ENCODE measurements at regions of chr5 and their contacts with region 1.

Region 1: DNA sequence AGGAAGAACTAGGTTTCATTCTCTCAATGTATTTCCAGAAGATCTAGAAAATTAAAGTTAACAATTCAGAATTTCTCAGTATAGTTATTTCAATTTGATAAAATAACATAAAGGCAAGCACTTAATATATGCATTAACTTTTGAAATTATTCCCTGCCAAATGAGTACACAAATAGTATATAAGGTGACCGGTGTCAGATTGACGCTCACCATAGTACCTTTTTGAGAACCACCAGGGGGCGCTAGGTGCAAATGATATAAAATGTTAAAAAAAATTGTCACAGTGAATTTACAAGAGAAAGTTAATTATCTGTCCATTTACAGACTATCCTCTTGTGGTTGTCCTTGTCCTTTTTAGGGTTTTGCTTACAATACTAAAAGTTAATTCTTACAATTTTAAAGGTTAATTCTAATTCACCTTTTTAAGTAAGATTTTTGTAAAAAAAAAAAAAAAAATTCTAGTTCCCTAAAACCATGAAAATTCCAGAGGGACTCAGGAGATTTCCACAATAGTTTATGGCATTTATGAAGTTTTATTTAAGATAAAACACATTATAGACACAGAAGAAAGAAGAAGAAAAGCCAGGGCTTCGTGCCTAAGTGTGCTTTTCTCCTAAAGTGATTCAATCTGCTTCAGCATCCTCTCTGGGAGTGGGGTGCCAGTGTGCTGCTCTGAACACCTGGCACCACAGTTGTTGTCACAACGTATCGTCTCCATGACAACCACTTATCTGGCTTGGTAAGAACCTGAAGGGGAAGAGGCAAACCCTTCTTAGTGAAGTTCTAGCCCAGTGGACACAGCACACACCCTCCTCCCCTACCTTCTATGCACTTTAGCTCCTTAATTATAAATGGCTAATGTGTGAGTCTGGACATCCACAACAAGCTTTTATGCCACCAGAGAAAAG is 1.7 kb downstream of the ADAMTS16 start:
- DNase-seq: peak in 1 of 2 donors; percentile 22
- ATAC-seq: peak; percentile 68 to 81
- H3K4me3 ChIP-seq: peak overlapping the region; percentile 42 to 48 (median 44)
- H3K27ac ChIP-seq: no peak overlapping the region
- H3K4me1 ChIP-seq: peaks cover 7 to 22% of the 10 kb centered on the region in 2 donors
- H3K27me3 ChIP-seq: peaks cover 20 to 25% (median 24%) of the 10 kb centered on the region in 3 donors
- CTCF ChIP-seq: peak; percentile 72 to 82 (median 75)
- POLR2A ChIP-seq: no peak

Region 2: GRCh38 chr5:5116956-5117355 is 24.9 kb before region 1 on chr5:
- in situ Hi-C with region 1: no loop called
- intact Hi-C with region 1: no loop called
- DNase-seq: no peak
- ATAC-seq: no peak
- H3K4me3 ChIP-seq: no peak overlapping the region
- H3K27ac ChIP-seq: no peak overlapping the region
- H3K4me1 ChIP-seq: no peaks in the 10 kb centered on the region
- H3K27me3 ChIP-seq: no peaks in the 10 kb centered on the region
- CTCF ChIP-seq: no peak
- POLR2A ChIP-seq: no peak

Region 3: GRCh38 chr5:5398046-5398445 is 256.2 kb after region 1 on chr5:
- in situ Hi-C with region 1: loop called in 3 of 4 experiments (anchors 5 to 10 kb)
- intact Hi-C with region 1: loop called (anchors 1 kb)
- DNase-seq: no peak
- ATAC-seq: no peak
- H3K4me3 ChIP-seq: no peak overlapping the region
- H3K27ac ChIP-seq: no peak overlapping the region
- H3K4me1 ChIP-seq: no peaks in the 10 kb centered on the region
- H3K27me3 ChIP-seq: no peaks in the 10 kb centered on the region
- CTCF ChIP-seq: no peak
- POLR2A ChIP-seq: no peak

Region 4: DNA sequence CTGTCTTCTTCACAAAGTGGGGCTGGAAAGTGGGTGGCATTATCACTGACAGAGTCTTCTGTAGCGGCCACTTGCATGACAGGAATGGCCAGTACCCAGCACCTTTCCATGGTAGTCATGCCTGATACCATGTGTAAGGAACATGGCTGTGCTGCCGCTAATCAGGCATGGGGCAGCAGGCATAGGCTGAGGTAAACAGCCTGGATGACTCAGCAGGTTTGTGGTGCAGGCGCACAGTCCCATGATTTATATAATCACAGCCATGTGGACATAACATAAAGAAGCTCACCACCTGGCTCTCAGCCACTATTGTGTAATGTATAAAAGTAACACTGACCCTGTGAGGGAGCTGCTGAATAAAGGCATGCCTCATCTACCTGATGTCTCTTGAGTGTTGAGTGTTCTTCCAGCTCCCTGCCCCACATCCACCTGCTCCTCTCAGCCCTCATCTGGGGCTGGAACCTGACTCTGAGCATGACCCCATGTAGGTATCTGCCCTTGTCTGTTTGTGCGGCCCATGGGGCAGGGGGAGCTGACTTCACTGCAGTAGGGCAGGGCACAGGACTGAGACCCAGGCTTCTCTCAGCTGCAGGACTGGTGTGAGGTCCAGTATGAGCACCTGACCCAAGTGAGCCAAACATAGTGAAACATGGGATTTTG is 267.4 kb after region 1 on chr5:
- in situ Hi-C with region 1: loop called in 1 of 4 experiments (anchors 10 kb)
- intact Hi-C with region 1: no loop called
- DNase-seq: no peak
- ATAC-seq: no peak
- H3K4me3 ChIP-seq: no peak overlapping the region
- H3K27ac ChIP-seq: no peak overlapping the region
- H3K4me1 ChIP-seq: no peaks in the 10 kb centered on the region
- H3K27me3 ChIP-seq: no peaks in the 10 kb centered on the region
- CTCF ChIP-seq: no peak
- POLR2A ChIP-seq: no peak